ENCODE measurements at regions of chr14 and their contacts with region 1.

Region 1: DNA sequence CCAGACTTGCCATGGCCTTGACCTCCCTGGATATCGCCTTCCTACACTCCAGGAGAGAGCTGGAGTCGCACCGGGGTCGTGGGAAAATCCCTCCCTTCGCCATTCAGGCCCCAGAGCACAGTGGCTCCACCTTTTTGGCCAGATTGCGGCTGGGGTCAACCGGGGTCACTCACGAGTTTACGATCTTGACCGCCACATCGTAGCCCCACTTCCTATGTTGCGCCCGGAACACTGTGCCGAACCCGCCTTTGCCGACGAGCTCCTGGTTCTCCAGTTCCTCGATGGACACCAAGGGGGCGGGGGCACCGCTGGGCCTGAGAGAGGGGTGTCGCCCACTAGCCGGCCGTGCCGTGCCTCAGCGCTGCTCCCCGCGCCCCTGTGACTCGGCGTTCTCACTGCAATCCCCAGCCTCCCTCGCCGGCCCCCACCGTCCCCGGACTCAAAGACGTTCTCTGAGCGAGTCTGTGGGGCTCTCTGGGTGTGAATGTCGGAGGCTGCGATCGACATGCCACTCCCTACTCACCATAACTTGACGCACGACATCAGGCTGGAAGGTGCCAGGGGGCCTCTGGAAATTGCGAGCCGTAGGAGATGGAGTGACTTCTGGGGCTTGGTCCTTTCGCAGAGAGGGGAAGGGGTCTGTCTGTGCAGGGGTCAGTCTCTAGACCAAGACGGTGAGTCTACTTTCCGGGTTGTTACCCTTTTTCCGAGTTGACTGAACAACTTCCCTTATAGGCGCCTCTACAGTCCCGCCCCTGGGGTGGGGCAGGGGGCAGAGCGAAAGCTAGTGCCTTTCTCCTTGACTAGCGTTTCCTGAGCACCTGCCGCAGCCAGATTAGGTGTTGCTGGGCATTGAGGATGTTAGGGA is at the start of gene RIPK3:
- DNase-seq: peak; percentile 79
- ATAC-seq: peak; percentile 96
- H3K4me3 ChIP-seq: peak within 1 kb of the TSS; percentile 85 to 98 (median 89)
- H3K4me3 Mint-ChIP-seq: peak within 1 kb of the TSS; percentile 99
- H3K27ac ChIP-seq: peak within 1 kb of the TSS; percentile 65 to 73
- H3K27ac Mint-ChIP-seq: peak within 1 kb of the TSS; percentile 98
- H3K4me1 ChIP-seq: peaks cover 25 to 33% of the 10 kb centered on the region in 2 donors
- H3K4me1 Mint-ChIP-seq: peaks cover 32% of the 10 kb centered on the region
- H3K27me3 ChIP-seq: peaks cover 0 to 21% (median 4%) of the 10 kb centered on the region in 4 experiments
- H3K27me3 Mint-ChIP-seq: peaks cover 12% of the 10 kb centered on the region
- CTCF ChIP-seq: no peak
- total RNA-seq, gene RIPK3: 76.6 and 77.6 TPM in 2 replicates

Region 2: DNA sequence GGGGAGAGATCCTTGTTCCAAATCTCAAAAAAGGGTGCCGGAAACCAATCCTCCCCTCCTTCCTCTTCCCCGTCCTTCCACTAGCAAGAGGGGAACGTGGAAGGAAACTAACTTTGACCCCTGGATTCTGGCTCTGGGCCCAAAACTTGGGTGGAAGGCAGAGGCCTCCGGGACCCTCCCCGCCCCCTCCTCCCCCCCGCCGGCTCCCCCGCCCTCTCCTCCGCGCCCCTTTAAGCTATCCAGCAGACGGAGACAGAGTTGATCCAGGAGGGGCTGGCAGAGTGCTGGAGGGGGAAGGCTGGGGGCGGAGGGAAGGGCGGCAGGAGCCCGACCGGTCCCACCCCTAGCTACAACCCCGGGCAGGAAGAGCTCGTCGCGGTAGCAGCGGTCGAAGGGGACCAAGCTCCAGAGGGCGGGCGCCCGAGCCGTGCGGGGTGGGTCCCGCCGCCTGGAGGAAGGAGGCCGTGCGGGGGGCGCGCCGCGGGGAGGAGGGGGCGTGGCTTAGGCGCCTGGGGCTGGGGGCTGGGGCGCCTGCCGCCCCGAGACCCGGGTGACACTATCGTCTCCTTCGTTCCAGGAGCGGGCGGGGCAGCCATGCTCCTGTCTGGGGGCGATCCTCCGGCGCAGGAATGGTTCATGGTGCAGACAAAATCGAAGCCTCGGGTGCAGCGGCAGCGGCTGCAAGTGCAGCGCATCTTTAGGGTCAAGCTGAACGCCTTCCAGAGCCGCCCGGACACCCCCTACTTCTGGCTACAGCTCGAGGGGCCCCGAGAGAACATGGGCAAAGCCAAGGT is 59.3 kb after region 1 on chr14 and contains the start of gene NYNRIN:
- CTCF ChIA-PET with region 1: interaction called, 5 read pairs
- POLR2A ChIA-PET with region 1: no interaction called
- intact Hi-C with region 1: loop called (anchors 2 kb)
- DNase-seq: peak; percentile 44
- ATAC-seq: peak; percentile 77
- H3K4me3 ChIP-seq: peak within 1 kb of the TSS in 4 of 5 experiments; percentile 26 to 56 (median 52)
- H3K4me3 Mint-ChIP-seq: peak within 1 kb of the TSS; percentile 75
- H3K27ac ChIP-seq: no peak within 1 kb of the TSS
- H3K27ac Mint-ChIP-seq: no peak within 1 kb of the TSS
- H3K4me1 ChIP-seq: peaks cover 9 to 12% of the 10 kb centered on the region in 2 donors
- H3K4me1 Mint-ChIP-seq: peaks cover 11% of the 10 kb centered on the region
- H3K27me3 ChIP-seq: peaks cover 0 to 18% (median under 1%) of the 10 kb centered on the region in 4 experiments
- H3K27me3 Mint-ChIP-seq: peaks cover 25% of the 10 kb centered on the region
- CTCF ChIP-seq: no peak
- total RNA-seq, gene NYNRIN: 0.29 and 0.34 TPM in 2 replicates

Measured in B cell (primary cell).